ENCODE measurements at regions of chr9 and their contacts with region 1.

Region 1: DNA sequence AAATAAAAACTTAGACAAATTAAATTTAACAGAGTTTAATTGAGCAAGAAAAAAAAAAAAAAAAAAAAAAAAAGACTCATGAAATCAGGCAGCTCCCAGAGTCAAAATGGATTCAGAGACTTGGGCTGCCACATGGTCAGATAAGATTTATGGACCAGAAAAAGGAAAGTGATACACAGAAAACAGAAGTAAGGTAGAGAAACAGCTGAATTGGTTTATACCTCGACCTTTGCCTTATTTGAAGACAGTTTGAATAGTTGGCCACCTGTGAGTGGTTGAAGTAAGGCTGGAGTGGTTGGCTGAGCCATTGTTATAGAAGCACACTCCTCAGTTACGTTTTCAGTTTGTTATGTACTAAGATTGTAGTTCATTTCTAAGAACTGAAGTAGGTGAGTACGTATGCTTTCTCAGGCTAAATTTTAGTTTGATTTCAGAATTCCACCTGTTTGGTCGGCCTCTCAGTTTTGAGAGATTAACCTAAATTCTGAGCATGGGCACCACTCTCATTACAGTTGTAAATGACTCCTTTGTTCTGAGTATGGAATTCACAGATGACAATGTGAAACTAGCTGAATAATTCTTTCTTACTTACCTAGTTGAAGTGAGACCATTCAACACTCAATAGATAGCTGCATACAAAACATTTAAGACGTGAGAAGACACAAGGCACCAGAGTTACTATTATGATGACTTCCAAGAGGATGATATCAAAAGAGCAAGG is 149.0 kb downstream of the AOPEP start:
- DNase-seq: no peak
- H3K4me3 ChIP-seq: no peak overlapping the region
- H3K27ac ChIP-seq: no peak overlapping the region
- H3K4me1 ChIP-seq: peaks cover 35% of the 10 kb centered on the region
- H3K27me3 ChIP-seq: no peaks in the 10 kb centered on the region
- CTCF ChIP-seq: no peak

Region 2: GRCh38 chr9:94697972-94698581 is 177.4 kb before region 1 on chr9:
- CTCF ChIA-PET with region 1: no interaction called
- dilution Hi-C with region 1: no loop called
- in situ Hi-C with region 1: no loop called
- intact Hi-C with region 1: no loop called
- DNase-seq: peak; percentile 41
- H3K4me3 ChIP-seq: no peak overlapping the region
- H3K27ac ChIP-seq: no peak overlapping the region
- H3K4me1 ChIP-seq: peaks cover 7% of the 10 kb centered on the region
- H3K27me3 ChIP-seq: no peaks in the 10 kb centered on the region
- CTCF ChIP-seq: no peak

Region 3: DNA sequence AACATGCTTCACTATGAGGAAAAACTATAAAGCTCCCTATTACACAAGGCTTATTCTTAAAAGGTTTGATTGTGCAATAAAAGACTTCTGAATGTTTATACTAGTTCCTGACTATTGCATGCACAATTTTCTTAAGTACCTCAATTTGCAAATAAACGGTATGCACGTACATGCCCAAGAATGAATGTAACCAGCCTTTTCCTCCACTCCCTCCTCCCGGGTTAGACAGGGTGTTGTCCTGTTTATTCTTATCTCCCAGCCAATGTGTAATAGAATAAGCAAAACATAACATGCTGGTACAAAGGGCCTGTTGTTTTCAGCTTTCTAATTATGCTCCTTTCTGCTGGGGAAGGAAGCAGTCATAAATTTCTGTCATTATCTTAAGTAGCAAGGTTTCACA is 69.9 kb before region 1 on chr9:
- CTCF ChIA-PET with region 1: no interaction called
- dilution Hi-C with region 1: loop called (anchors 5 kb)
- in situ Hi-C with region 1: no loop called
- intact Hi-C with region 1: no loop called
- DNase-seq: peak; percentile 99
- H3K4me3 ChIP-seq: no peak overlapping the region
- H3K27ac ChIP-seq: peak overlapping the region; percentile 96
- H3K4me1 ChIP-seq: peaks cover 48% of the 10 kb centered on the region
- H3K27me3 ChIP-seq: no peaks in the 10 kb centered on the region
- CTCF ChIP-seq: no peak

Measured in mammary epithelial cell (primary cell).